Activated T-helper 1 cell treated with anti-CD3 and anti-CD28 coated beads, Interleukin-12 subunit alpha, Interleukin-12 subunit beta, Interleukin-2, Interleukin-4 antibody, amounts not matched to agents 30 ng/mL and 10 ng/mL and 1 ng/mL, durations not matched to agents 14 hours and 24 hours and 36 hours (primary cell): ENCODE measurements at regions of chrX and their contacts with region 1.

Region 1: DNA sequence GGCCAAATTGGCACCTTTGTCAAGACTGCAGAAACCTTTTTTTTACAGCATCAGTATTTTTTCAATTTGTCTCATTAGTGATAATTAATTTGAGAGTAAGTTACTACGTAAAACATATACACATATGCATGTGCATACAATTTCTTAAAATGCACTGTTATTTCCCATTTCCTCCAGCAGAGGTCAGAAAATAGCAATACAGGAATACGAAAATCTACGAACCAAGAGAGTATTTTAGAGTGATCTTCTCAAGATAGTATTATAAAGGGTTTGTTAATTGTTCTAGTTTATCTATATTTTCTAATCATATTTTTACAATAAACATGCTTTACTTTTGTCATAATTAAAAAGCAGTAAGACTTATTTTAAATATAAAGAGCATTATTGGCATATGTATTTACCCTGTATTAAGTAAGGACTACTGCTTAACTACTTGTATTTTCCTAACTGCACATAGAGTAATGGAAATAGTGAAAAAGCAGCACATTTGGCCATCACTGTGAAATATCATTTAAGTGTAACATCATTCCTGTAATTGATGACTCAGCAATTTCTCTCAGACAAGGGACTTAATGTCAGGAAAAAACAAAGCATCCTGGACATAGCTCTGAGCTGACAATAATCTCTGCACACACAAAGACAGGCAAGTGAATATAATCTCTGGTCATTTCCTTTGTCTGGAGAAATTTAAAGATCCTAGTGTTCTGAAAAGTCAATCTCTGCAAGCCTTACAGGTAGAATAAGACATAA is 45.6 kb downstream of the MAOB start:
- DNase-seq: no peak
- H3K4me3 Mint-ChIP-seq: no peak overlapping the region
- H3K27ac Mint-ChIP-seq: no peak overlapping the region
- H3K4me1 Mint-ChIP-seq: no peaks in the 10 kb centered on the region
- H3K27me3 Mint-ChIP-seq: peaks cover 2% of the 10 kb centered on the region

Region 2: GRCh38 chrX:43849173-43849572 is 12.6 kb after region 1 on chrX:
- intact Hi-C with region 1: no loop called
- DNase-seq: no peak
- H3K4me3 Mint-ChIP-seq: no peak overlapping the region
- H3K27ac Mint-ChIP-seq: no peak overlapping the region
- H3K4me1 Mint-ChIP-seq: no peaks in the 10 kb centered on the region
- H3K27me3 Mint-ChIP-seq: no peaks in the 10 kb centered on the region

Region 3: DNA sequence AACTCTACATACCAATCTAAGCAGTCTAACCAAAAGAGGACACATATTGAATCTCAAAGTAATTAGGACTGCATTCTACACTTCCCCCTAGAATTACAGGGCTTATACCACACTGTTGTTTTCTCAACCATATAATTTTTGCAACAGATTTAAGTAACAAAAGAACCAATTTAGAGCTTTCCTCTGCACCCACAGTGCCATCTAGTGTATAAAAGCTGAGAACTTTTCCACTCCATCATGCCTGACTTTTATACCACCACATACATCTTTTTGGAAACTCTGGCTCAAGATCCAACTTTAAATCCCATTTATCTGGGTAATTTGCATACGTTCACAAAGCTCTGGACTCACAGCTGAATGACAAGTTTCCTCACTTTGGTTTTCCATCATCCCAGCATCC is 407.4 kb after region 1 on chrX:
- intact Hi-C with region 1: loop called (anchors 5 kb)
- DNase-seq: no peak
- H3K4me3 Mint-ChIP-seq: no peak overlapping the region
- H3K27ac Mint-ChIP-seq: no peak overlapping the region
- H3K4me1 Mint-ChIP-seq: peaks cover 18% of the 10 kb centered on the region
- H3K27me3 Mint-ChIP-seq: peaks cover 2% of the 10 kb centered on the region

Region 4: DNA sequence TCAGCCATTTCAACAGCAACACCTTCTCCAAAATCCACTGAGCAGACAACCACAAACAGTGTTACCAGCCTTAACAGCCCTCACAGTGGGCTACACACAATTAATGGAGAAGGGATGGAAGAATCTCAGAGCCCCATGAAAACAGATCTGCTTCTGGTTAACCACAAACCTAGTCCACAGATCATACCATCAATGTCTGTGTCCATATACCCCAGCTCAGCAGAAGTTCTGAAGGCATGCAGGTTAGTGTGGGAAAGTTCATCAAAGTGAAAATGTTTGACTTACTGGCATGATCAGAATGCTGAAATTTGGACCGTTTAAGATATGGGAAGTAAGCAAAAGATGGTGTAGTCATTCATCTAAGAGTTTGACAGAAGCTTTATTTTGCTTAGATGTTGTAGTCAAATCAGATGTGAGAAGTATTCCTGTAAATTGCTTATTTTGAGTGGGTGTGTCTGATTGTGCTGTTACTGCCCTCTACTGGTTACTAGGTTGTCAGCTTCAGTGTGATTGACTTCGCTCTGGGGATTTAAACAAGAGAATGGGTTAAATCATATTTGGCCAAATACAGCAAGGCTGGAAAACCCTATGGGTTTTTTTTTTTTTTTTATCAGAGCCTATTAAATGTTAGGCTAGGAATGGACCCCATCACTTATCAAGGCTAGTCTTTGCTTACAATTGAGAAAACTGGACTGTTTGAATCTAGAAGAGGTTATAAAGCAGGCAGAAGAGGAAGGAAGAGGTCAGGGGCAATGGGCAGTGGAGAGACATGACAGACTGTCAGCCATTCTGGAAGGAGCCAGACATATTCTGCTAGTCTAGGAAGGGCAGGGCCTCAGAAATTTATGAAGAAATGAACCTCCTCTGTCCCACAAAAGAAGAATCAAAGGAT is 1233.8 kb after region 1 on chrX:
- intact Hi-C with region 1: loop called (anchors 5 kb)
- DNase-seq: no peak
- H3K4me3 Mint-ChIP-seq: no peak overlapping the region
- H3K27ac Mint-ChIP-seq: peak overlapping the region; percentile 63
- H3K4me1 Mint-ChIP-seq: peaks cover 44% of the 10 kb centered on the region
- H3K27me3 Mint-ChIP-seq: no peaks in the 10 kb centered on the region

Region 5: GRCh38 chrX:45186643-45187026 is 1350.0 kb after region 1 on chrX:
- intact Hi-C with region 1: loop called (anchors 5 kb)
- DNase-seq: no peak
- H3K4me3 Mint-ChIP-seq: peak overlapping the region; percentile 87
- H3K27ac Mint-ChIP-seq: peak overlapping the region; percentile 78
- H3K4me1 Mint-ChIP-seq: peaks cover 26% of the 10 kb centered on the region
- H3K27me3 Mint-ChIP-seq: no peaks in the 10 kb centered on the region